HepG2 (cell line): ENCODE measurements at regions of chr19 and their contacts with region 1.

Region 1: GRCh38 chr19:56140583-56141416 is at the start of gene ZNF444:
- DNase-seq: peak; percentile 98
- ATAC-seq: peak; percentile 83
- H3K4me3 ChIP-seq: peak within 1 kb of the TSS; percentile 72 to 84 (median 83)
- H3K27ac ChIP-seq: peak within 1 kb of the TSS; percentile 100
- H3K4me1 ChIP-seq: peaks cover 86% of the 10 kb centered on the region
- H3K27me3 ChIP-seq: no peaks in the 10 kb centered on the region; a peak in 1 of 5 replicates
- CTCF ChIP-seq: no peak
- EP300 ChIP-seq: peak in 1 of 2 experiments; percentile 5; a peak in 1 of 4 replicates
- POLR2A ChIP-seq: peak in 1 of 2 experiments; percentile 53; a peak in 2 of 4 replicates
- RAD21 ChIP-seq: peak; percentile 40; the same call in 1 of the 2 replicates
- total RNA-seq, gene ZNF444: 24.4 and 30.3 TPM in 2 replicates

Region 2: GRCh38 chr19:56105090-56105701 is 35.6 kb before region 1 on chr19:
- CTCF ChIA-PET with region 1: no interaction called
- POLR2A ChIA-PET with region 1: interaction called, 55 read pairs
- in situ Hi-C with region 1: no loop called
- intact Hi-C with region 1: loop called (anchors 2 kb)
- DNase-seq: peak; percentile 78
- ATAC-seq: peak; percentile 84
- H3K4me3 ChIP-seq: peak overlapping the region in 1 of 3 experiments; percentile 25; a peak in 2 of 6 replicates
- H3K27ac ChIP-seq: peak overlapping the region; percentile 53
- H3K4me1 ChIP-seq: peaks cover 44% of the 10 kb centered on the region
- H3K27me3 ChIP-seq: no peaks in the 10 kb centered on the region
- CTCF ChIP-seq: peak; percentile 82
- EP300 ChIP-seq: no peak
- POLR2A ChIP-seq: no peak
- RAD21 ChIP-seq: peak; percentile 89

Region 3: DNA sequence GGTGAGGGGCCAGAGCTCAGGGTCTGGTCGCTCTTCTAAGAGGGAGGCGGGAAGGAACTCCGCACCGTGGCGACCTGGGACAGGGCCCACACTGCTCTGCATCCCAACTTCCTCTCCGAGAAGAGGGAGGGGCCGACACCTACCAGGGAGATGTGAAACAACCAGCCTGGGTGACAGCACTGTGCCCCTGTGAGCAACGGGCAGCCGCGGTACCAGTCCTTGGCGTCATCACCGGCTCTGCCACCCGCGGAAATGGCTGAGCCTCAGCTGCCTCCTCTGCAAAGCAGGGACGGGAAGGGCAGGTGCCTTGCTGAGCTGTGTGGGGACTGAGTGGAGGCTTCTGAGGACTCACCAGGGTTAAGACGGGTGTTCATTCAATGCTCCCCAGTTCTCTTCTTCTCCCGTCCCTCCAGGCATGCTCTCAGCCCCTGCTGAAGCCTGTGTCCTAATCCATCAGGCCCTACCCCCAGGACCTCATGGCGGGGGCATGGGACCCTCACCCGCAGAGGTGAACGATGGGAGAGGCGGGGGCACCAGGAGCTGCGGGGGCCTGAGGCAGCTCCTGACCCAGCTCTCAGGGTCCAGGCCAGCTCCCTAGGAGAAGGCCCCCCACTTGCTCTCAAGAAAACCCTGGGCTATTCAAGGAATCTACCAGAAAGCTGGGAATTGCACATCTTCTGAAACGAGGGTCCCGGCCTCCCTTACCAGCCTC is 29.0 kb before region 1 on chr19:
- CTCF ChIA-PET with region 1: no interaction called
- POLR2A ChIA-PET with region 1: interaction called, 55 read pairs
- in situ Hi-C with region 1: no loop called
- intact Hi-C with region 1: no loop called
- DNase-seq: peak; percentile 45
- ATAC-seq: peak; percentile 72
- H3K4me3 ChIP-seq: peak overlapping the region in 2 of 3 experiments; percentile 41 to 57; a peak in 3 of 6 replicates
- H3K27ac ChIP-seq: peak overlapping the region; percentile 83
- H3K4me1 ChIP-seq: peaks cover 83% of the 10 kb centered on the region
- H3K27me3 ChIP-seq: no peaks in the 10 kb centered on the region
- CTCF ChIP-seq: no peak
- EP300 ChIP-seq: no peak
- POLR2A ChIP-seq: no peak
- RAD21 ChIP-seq: no peak

Region 4: DNA sequence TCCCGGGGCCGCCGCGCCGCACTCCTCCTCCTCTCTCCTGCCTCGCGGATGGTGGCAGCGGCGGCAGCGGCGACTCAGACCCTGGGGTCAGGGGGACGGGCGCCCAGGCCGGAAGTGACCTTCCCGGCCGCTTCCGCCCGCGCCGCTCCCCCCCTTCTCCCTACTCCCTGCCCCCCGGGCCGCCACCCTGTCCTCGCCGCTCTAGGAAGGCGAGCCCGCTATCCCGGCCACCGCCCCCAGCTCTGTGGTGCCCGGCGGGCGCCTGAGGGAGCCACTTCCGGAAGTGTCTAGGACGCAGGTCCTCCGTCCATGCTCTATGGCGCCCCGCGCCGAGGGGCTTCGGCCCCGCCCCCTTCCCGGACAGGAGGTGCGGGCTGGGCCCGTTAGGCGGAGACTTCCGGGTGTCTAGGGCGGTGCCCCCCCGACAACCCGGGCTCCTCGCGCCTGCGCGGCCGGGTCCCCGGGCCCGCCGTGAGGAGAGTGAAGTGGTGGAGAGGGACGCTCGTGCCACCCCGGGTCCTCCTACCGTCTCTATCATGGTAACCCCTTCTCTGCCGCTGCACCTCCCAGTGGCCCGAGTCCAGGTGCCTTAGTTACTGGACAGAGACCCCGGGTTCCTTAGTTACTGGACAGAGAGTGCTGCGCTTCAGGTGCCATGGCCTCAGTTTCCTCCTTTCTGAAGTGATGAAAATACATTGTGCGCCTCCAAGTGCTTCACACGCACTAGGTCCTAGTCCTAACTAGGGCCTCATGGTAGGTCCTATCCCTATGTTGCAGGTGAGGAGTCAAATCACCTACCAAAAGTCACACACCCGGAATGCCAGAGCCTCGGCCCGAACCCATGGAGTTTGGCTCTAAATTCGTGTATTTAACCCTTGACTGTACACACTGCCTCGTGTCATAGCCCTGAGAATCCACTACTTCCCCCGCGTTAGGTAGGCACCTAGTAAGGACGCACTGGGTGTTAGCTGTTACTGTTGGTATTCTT is 19.3 kb before region 1 on chr19 and contains the start of gene ZNF787:
- CTCF ChIA-PET with region 1: no interaction called
- POLR2A ChIA-PET with region 1: interaction called, 113 read pairs
- in situ Hi-C with region 1: no loop called
- intact Hi-C with region 1: loop called (anchors 1 kb)
- DNase-seq: peak; percentile 96
- ATAC-seq: peak; percentile 83
- H3K4me3 ChIP-seq: peak within 1 kb of the TSS; percentile 69 to 90 (median 87)
- H3K27ac ChIP-seq: peak within 1 kb of the TSS; percentile 99
- H3K4me1 ChIP-seq: peaks cover 62% of the 10 kb centered on the region
- H3K27me3 ChIP-seq: no peaks in the 10 kb centered on the region; a peak in 1 of 5 replicates
- CTCF ChIP-seq: 0 out of 2 replicates have a peak, but pooled peaks have one; percentile 34
- EP300 ChIP-seq: no peak
- POLR2A ChIP-seq: peak in 1 of 2 experiments; percentile 56; a peak in 2 of 4 replicates
- RAD21 ChIP-seq: no peak; the same call in 1 of the 2 replicates
- total RNA-seq, gene ZNF787: 35.6 and 42.8 TPM in 2 replicates

Region 5: GRCh38 chr19:56155124-56155687 is 14.4 kb after region 1 on chr19:
- CTCF ChIA-PET with region 1: no interaction called
- POLR2A ChIA-PET with region 1: interaction called, 52 read pairs
- in situ Hi-C with region 1: no loop called
- intact Hi-C with region 1: no loop called
- DNase-seq: no peak
- ATAC-seq: peak; percentile 67
- H3K4me3 ChIP-seq: no peak overlapping the region
- H3K27ac ChIP-seq: no peak overlapping the region
- H3K4me1 ChIP-seq: peaks cover 28% of the 10 kb centered on the region
- H3K27me3 ChIP-seq: no peaks in the 10 kb centered on the region
- CTCF ChIP-seq: peak; percentile 76
- EP300 ChIP-seq: no peak
- POLR2A ChIP-seq: no peak
- RAD21 ChIP-seq: peak; percentile 68

Region 6: GRCh38 chr19:56162258-56162657 is 21.5 kb after region 1 on chr19:
- CTCF ChIA-PET with region 1: no interaction called
- POLR2A ChIA-PET with region 1: interaction called, 19 read pairs
- in situ Hi-C with region 1: no loop called
- intact Hi-C with region 1: no loop called
- DNase-seq: no peak
- ATAC-seq: peak; percentile 9; the same call in 2 of the 3 replicates
- H3K4me3 ChIP-seq: no peak overlapping the region
- H3K27ac ChIP-seq: no peak overlapping the region
- H3K4me1 ChIP-seq: peaks cover 7% of the 10 kb centered on the region
- H3K27me3 ChIP-seq: no peaks in the 10 kb centered on the region
- CTCF ChIP-seq: no peak
- EP300 ChIP-seq: no peak
- POLR2A ChIP-seq: no peak
- RAD21 ChIP-seq: no peak

Region 7: DNA sequence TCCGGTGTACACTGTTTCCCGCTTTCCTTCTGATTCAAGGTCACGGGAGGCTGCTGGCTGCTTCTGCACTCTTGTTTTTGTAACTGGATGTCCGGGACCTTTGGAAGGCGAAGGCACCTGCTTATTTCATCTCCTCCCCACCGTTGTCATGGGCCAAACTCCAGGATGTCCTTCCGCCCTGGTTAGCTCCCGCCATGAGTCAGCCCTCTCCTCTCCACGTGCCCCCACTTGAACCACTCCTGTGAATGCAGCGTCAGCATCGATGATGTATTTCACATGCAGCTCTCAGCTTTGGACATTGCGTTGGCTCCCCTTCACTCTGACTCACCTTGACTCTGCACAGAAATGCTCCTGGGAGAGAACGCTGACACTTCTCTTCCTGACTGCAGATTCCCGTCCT is 29.5 kb after region 1 on chr19:
- CTCF ChIA-PET with region 1: no interaction called
- POLR2A ChIA-PET with region 1: interaction called, 26 read pairs
- in situ Hi-C with region 1: no loop called
- intact Hi-C with region 1: loop called (anchors 2 kb)
- DNase-seq: peak; percentile 86
- ATAC-seq: peak; percentile 87
- H3K4me3 ChIP-seq: peak overlapping the region in 2 of 3 experiments; percentile 8 to 35; a peak in 4 of 6 replicates
- H3K27ac ChIP-seq: peak overlapping the region; percentile 33
- H3K4me1 ChIP-seq: peaks cover 50% of the 10 kb centered on the region
- H3K27me3 ChIP-seq: peaks cover 0 to 6% of the 10 kb centered on the region in 2 experiments; a peak in 2 of 5 replicates
- CTCF ChIP-seq: 0 out of 2 replicates have a peak, but pooled peaks have one; percentile 3
- EP300 ChIP-seq: 0 out of 4 replicates have a peak, but pooled peaks of 1 of the 2 experiments have one; percentile 22
- POLR2A ChIP-seq: peak; percentile 34 to 36; a peak in 1 of 4 replicates
- RAD21 ChIP-seq: no peak